Right ventricle myocardium superior (tissue), 1 donor: ENCODE measurements at regions of chrX and their contacts with region 1.

Region 1: DNA sequence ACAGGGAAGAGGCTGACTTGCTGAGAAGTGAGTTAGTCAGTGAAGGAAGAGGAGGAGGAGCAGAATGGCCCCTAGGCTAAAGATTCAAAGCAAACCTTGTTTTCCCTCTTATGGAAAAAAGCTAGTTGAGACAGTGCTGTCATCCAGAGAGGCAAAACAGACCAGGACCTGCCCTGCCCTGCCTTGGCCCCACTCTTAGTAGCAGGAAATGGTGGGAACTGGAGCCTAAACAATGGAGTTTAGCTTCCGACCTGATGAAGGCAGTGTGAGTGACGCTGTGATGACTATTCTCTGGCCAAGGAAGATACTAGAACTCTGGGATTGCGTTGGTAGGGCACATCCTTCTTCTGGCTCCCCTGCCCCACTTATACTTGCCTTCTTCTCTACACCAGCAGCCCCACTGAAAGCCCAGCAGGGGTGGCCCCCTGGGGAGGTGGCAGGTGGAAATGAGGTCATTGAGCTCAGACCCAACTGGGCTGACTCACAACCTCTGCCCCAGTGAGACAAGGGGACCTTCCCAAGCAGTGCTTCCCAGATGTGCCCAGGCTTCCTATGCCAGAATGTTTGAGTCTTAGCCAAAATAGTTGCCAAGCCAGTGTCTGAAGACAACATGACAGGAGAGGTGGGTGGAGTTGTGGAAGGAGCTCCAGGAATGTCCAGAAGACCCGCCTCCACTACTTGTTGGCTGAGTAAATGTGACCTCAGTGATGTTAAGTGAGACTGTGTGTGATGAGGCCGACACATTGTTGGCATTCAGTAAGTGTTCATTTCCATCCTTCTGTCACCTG is 38.8 kb downstream of the MSN start:
- DNase-seq: peak; percentile 44
- ATAC-seq: peak; percentile 90

Region 2: DNA sequence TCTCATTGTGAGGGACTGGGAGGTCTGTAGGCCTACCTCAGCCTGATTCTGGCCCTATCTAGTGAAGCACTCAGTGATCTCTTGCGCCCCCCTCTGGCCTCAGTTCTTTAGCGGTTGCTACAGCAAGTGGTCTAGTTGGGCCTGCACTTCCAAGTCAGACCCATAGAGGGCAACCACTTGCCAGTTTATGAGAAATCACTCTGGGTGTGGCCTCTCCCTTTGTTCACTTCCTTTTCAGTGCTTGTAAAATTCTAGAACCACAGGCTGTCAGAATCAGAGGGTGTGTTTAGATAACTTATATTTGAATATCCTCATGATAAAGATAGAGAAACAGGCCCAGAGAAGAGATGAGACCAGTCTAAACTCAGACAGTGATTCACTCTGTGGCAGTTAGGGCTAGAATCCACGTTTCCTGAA is 110.8 kb before region 1 on chrX:
- intact Hi-C with region 1: loop called (anchors 10 kb)
- DNase-seq: peak; percentile 93
- ATAC-seq: peak; percentile 99

Region 3: GRCh38 chrX:65667503-65668376 is 38.5 kb before region 1 on chrX and contains the start of gene MSN:
- intact Hi-C with region 1: loop called (anchors 5 kb)
- DNase-seq: peak; percentile 89
- ATAC-seq: peak; percentile 94
- total RNA-seq, gene MSN: 97.6 TPM